ENCODE measurements at regions of chr2 and their contacts with region 1.

Region 1: DNA sequence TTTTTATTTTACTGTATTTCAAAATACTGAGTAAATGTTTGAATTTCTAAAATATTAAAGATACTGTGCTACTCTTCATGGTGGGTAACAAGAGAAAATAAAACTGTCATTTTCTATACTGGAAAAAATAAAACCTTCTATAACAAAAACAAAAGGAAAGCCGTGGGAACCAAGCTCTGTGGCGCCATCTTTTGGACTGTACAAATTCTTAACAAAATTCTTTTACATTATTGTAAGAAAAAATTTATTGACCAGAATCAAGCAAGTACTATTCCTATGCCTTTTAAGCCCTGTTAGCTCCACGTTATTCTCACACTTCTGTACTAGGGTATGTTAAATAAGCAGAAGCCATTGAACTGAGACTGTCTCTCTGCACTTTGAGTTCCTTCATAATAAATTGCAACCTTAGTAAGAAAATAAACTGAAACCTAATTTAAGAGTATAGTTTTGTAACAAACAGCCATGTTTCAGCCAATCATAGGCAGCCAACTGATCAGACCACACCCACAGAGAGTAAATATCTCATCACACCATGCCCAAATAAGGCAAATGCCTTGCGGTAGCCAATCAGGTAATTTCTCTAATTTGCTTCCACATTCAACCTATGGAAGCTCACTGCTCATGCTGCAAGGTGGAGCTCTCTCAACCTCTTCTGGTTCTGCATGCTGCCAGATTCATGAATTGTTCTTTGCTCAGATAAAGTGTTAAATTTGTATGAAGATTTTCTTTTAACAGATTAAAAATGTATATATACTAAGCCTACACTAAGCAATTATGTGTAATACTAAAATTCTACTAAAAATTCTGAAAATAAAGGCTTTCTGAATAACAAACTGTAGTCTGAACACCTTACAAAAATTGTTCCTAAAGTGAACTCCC is 42.2 kb downstream of the HIBCH start:
- DNase-seq: peak; percentile 45
- ATAC-seq: peak; percentile 76
- H3K4me3 Mint-ChIP-seq: no peak overlapping the region
- H3K27ac Mint-ChIP-seq: no peak overlapping the region
- H3K4me1 Mint-ChIP-seq: peaks cover 3% of the 10 kb centered on the region
- H3K27me3 Mint-ChIP-seq: no peaks in the 10 kb centered on the region

Region 2: GRCh38 chr2:190023861-190024260 is 253.6 kb before region 1 on chr2:
- CTCF ChIA-PET with region 1: no interaction called
- POLR2A ChIA-PET with region 1: no interaction called
- intact Hi-C with region 1: loop called in 1 of 2 experiments (anchors 5 kb)
- DNase-seq: no peak
- ATAC-seq: peak; percentile 61
- H3K4me3 Mint-ChIP-seq: no peak overlapping the region
- H3K27ac Mint-ChIP-seq: no peak overlapping the region
- H3K4me1 Mint-ChIP-seq: no peaks in the 10 kb centered on the region
- H3K27me3 Mint-ChIP-seq: peaks cover 11% of the 10 kb centered on the region

Measured in activated CD4-positive, alpha-beta T cell treated with anti-CD3 and anti-CD28 coated beads for 36 hours (primary cell).